GM10248 (cell line): ENCODE measurements at regions of chr7 and their contacts with region 1.

Region 1: DNA sequence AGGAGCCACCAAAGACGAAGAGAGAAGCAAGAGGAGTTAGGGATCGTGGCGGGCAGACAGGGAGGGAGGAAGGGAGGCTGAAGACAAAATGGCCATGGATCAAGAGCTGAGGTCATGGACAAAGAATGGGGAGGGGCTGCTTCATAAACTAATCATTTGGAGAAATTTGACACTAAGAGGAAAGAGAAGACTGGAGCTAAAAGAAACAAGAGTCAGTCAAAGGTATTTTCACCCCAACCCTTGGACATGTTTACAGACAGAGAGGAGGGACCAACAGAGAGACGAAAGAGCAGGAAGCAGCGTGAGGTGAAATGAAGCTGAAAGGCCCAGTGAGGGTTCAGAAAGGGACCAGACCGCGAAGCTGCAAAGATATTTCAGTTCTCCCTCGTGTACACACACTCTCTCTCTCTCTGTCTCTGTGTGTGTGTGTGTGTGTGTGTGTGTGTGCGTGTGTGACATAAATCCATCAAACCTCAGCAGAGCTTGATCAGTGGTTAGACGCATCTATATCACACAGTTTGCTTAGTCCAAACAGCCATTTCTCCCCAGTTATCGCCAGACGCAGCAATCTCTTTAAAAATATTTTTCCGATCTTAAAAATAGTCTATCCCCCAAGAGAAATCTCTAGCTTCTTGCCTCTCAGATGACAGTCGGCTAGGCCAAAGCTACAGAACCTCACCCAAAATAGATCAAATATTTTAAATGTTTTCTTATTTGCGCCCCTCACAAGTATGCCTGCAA is 12.5 kb upstream of the CALD1 start:
- DNase-seq: peak; percentile 51
- CTCF ChIP-seq: no peak

Region 2: DNA sequence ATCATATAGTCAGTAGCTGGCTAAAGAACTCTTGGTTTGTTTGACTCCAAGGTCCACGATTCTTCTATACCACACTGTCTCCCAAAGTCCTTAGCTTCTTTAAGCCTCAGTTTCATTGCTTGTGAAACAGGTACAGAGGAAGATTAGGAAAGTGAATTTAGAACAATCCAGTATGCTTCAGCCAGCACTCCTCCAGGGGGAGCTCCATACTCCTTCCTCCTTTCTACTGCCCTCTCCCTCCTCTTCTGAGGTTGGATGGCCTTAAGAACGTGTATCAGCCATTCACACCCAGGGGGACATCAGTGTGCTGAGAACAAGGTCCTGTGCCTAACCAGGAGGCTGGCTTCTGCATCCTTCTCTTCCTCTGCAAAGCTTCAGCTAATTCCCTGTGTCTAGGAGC is 42.3 kb before region 1 on chr7:
- CTCF ChIA-PET with region 1: interaction called, 11 read pairs
- POLR2A ChIA-PET with region 1: no interaction called
- DNase-seq: peak; percentile 32
- CTCF ChIP-seq: peak; percentile 45

Region 3: GRCh38 chr7:134750083-134751062 is 16.6 kb before region 1 on chr7:
- CTCF ChIA-PET with region 1: interaction called, 30 read pairs
- POLR2A ChIA-PET with region 1: no interaction called
- DNase-seq: peak; percentile 68
- CTCF ChIP-seq: peak; percentile 73

Region 4: GRCh38 chr7:134782121-134782623 is 15.2 kb after region 1 on chr7:
- CTCF ChIA-PET with region 1: interaction called, 14 read pairs
- POLR2A ChIA-PET with region 1: no interaction called
- DNase-seq: peak; percentile 21
- CTCF ChIP-seq: no peak